ENCODE measurements at regions of chr2 and their contacts with region 1.

Region 1: GRCh38 chr2:112884869-112885505 is 26.0 kb upstream of the IL37 start:
- DNase-seq: peak; percentile 61
- H3K4me3 Mint-ChIP-seq: no peak overlapping the region
- H3K27ac Mint-ChIP-seq: no peak overlapping the region
- H3K4me1 Mint-ChIP-seq: peaks cover 19% of the 10 kb centered on the region
- H3K27me3 Mint-ChIP-seq: no peaks in the 10 kb centered on the region
- CTCF ChIP-seq: peak; percentile 96

Region 2: GRCh38 chr2:112606488-112606902 is 278.5 kb before region 1 on chr2:
- CTCF ChIA-PET with region 1: no interaction called
- POLR2A ChIA-PET with region 1: no interaction called
- intact Hi-C with region 1: loop called (anchors 10 kb)
- DNase-seq: no peak
- H3K4me3 Mint-ChIP-seq: no peak overlapping the region
- H3K27ac Mint-ChIP-seq: no peak overlapping the region
- H3K4me1 Mint-ChIP-seq: peaks cover 4% of the 10 kb centered on the region
- H3K27me3 Mint-ChIP-seq: no peaks in the 10 kb centered on the region
- CTCF ChIP-seq: no peak

Region 3: DNA sequence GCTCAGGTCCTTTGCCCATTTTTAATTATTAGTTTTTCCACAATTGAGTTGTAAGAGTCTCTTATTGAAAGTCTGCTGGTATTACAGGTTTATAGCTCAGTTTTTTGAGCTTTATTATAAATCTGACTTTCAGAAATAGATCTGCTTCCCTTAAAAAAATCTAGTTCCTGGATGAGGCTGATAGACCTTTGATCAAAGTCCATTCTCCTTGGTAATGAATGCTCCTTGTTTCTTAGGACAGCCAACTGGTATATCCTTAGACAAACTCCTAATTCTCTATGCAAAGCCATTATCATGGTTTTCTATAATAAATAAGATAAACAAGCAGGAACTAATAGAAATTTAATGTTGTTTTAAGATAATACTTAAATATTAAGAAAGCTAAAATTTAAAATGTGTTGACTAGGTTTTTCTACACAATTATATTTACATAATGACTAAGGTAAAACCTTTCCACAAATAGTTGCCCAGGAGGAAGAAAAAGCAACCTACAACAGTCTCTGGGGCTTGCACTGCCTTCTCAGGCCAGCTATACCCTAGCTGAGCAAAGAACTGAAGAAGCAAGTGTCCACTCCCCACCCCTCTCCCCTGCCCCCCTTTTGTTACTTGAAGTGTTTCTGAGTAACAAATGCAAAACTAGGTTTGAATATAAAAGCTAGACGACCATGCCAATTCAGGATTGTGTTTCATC is 147.3 kb before region 1 on chr2:
- CTCF ChIA-PET with region 1: interaction called, 10 read pairs
- POLR2A ChIA-PET with region 1: interaction called, 6 read pairs
- intact Hi-C with region 1: no loop called
- DNase-seq: no peak
- H3K4me3 Mint-ChIP-seq: no peak overlapping the region
- H3K27ac Mint-ChIP-seq: no peak overlapping the region
- H3K4me1 Mint-ChIP-seq: no peaks in the 10 kb centered on the region
- H3K27me3 Mint-ChIP-seq: no peaks in the 10 kb centered on the region
- CTCF ChIP-seq: no peak

Region 4: DNA sequence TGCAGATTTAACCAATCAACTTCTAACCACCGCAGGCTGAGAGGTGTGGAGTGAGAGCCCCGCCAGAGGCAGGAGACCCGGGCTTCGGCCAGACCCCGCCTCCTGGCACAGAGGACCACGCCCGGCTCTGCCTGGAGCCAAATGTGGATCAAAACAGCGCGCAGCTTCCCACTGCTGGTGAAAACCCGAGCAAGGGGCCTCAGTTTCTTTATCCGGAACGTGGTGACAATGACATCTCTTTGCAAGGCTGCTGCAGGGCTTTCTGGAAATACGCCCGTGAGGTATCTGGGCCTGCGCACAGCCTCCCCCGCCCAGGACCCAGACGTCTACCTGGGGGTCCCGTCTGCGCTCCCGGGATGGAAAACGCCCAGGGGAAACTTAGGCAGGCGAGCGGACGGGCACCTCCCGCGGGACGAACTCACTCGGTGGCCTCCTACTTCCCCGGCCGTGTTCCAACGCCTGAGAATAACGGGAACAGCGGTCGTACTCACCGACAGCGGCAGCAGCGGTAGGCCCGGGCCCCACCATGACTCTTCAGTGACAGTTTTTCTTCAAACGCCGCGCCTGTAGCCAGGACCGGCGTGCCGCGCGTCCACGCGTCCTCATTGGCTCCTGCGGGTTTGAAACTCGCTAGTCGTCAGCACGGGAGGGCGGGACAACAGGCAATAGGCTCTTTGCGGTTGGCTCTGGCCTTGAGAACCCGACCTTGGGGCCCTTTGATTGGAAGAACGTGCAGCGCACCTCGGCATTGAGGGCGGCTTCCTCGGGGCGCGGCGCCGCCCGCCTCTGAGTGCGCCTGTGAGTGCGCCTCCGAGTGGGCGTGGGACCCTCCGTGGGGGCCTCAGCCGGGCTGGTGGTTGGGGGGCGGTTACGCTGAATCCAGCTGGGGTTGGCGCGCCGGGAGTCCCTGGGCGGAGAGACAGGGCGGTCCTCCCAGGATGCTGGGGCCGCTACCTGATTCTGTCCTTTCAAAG is 120.6 kb before region 1 on chr2 and contains the start of gene CKAP2L:
- CTCF ChIA-PET with region 1: interaction called, 6 read pairs
- POLR2A ChIA-PET with region 1: interaction called, 4 read pairs
- intact Hi-C with region 1: loop called (anchors 5 kb)
- DNase-seq: peak; percentile 99
- H3K4me3 Mint-ChIP-seq: peak within 1 kb of the TSS; percentile 97
- H3K27ac Mint-ChIP-seq: peak within 1 kb of the TSS; percentile 95
- H3K4me1 Mint-ChIP-seq: peaks cover 28% of the 10 kb centered on the region
- H3K27me3 Mint-ChIP-seq: no peaks in the 10 kb centered on the region
- CTCF ChIP-seq: no peak
- total RNA-seq, gene CKAP2L: 14.7 and 21.6 TPM in 2 replicates

Region 5: GRCh38 chr2:112803691-112804521 is 81.1 kb before region 1 on chr2:
- CTCF ChIA-PET with region 1: interaction called, 14 read pairs
- POLR2A ChIA-PET with region 1: interaction called, 5 read pairs
- intact Hi-C with region 1: no loop called
- DNase-seq: peak; percentile 66
- H3K4me3 Mint-ChIP-seq: no peak overlapping the region
- H3K27ac Mint-ChIP-seq: peak overlapping the region; percentile 97
- H3K4me1 Mint-ChIP-seq: peaks cover 30% of the 10 kb centered on the region
- H3K27me3 Mint-ChIP-seq: no peaks in the 10 kb centered on the region
- CTCF ChIP-seq: no peak

Region 6: DNA sequence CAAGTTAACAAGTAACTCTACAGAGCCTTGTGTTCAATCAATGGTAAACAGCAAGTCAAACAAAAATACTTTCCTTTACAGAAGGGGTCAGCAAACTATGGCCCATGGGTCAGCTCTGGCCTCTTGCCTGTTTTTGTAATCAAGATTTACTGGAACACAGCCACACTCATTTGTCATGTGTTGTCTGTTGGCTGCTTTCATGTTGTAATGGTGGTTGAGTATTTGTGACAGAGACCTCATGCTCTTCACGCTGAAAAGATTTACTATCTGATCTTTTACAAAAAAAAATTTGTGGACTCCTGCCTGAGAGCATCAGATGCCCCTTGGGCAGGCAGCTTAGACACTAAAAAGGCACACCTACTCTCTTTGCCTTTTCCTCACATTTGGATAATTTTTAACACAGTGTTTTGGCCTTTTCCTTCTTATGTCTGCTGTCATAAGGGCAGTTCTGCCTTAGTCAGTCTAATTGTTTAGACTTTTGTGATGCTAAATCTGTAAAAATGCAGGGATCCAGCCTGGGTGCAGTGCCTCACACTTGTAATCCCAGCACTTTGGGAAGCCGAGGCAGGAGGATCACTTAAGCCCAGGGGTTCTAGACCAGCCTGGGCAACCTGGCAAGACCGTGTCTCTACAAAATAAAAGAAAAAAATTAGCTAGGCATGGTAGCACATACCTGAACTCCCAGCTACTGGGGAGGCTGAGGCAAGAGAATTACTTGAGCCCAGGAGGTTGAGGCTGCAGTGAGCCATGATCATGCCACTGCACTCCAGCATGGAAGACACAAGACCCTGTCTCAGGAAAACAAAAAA is 66.7 kb before region 1 on chr2:
- CTCF ChIA-PET with region 1: interaction called, 4 read pairs
- POLR2A ChIA-PET with region 1: interaction called, 11 read pairs
- intact Hi-C with region 1: no loop called
- DNase-seq: no peak
- H3K4me3 Mint-ChIP-seq: no peak overlapping the region
- H3K27ac Mint-ChIP-seq: no peak overlapping the region
- H3K4me1 Mint-ChIP-seq: peaks cover 31% of the 10 kb centered on the region
- H3K27me3 Mint-ChIP-seq: no peaks in the 10 kb centered on the region
- CTCF ChIP-seq: no peak

Region 7: GRCh38 chr2:112916145-112916571 is 31.2 kb after region 1 on chr2:
- CTCF ChIA-PET with region 1: no interaction called
- POLR2A ChIA-PET with region 1: no interaction called
- intact Hi-C with region 1: no loop called
- DNase-seq: no peak
- H3K4me3 Mint-ChIP-seq: no peak overlapping the region
- H3K27ac Mint-ChIP-seq: no peak overlapping the region
- H3K4me1 Mint-ChIP-seq: no peaks in the 10 kb centered on the region
- H3K27me3 Mint-ChIP-seq: no peaks in the 10 kb centered on the region
- CTCF ChIP-seq: no peak

Measured in MCF 10A (cell line).